MCF 10A (cell line): ENCODE measurements at regions of chr20 and their contacts with region 1.

Region 1: DNA sequence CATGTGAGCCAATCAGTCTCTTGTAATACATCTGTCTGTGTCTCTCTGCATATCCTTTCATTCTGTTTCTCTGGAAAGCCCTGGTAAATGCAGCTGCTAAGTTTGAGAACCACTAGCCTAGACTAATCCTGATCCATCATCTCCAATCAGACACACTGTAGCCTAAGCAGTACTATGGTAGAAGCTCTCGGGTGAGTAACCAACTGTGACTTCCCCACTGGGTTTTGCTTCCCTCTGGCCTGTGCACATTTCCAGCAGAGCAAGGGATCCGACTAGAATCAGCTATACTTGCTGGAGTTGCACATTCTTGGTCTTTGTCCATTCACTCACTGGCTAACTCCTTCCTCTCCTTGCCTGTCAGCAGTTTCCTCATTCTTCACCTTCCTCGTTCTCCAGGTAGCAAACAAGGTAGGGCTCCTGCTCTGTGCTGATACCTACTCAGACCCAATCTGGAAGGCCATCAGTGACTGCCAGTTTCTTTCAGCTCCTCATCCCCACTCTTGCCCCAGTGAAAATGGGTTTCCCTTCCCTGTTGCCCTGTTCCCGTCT is 184.2 kb downstream of the PLCB4 start:
- DNase-seq: no peak
- H3K4me3 Mint-ChIP-seq: no peak overlapping the region
- H3K27ac Mint-ChIP-seq: no peak overlapping the region
- H3K4me1 Mint-ChIP-seq: no peaks in the 10 kb centered on the region
- H3K27me3 Mint-ChIP-seq: no peaks in the 10 kb centered on the region
- CTCF ChIP-seq: no peak

Region 2: DNA sequence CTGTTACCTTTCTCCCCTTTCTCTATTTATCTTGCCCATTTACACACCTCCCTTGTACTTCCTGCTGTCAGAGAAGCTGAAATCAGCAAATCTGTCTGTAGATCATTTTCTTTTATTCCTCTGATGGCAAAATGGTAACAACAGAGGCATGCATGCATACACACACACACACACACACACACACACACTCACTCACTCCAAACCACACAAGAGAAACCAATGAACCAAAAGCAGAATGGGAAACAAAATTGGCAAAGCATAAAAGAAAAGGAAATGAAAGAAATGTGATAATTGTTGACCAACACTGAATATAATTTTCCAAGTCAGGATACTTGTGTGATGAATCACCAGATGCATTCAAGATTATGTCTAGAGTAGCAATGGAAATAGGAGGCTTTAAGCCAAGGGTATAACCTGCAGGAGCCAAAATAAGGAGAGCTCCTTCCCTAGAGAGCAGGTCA is 11.8 kb before region 1 on chr20:
- CTCF ChIA-PET with region 1: interaction called, 16 read pairs
- POLR2A ChIA-PET with region 1: interaction called, 6 read pairs
- intact Hi-C with region 1: no loop called
- DNase-seq: peak; percentile 76
- H3K4me3 Mint-ChIP-seq: no peak overlapping the region
- H3K27ac Mint-ChIP-seq: peak overlapping the region; percentile 17
- H3K4me1 Mint-ChIP-seq: peaks cover 14% of the 10 kb centered on the region
- H3K27me3 Mint-ChIP-seq: no peaks in the 10 kb centered on the region
- CTCF ChIP-seq: no peak